ENCODE measurements at regions of chr6 and their contacts with region 1.

Region 1: GRCh38 chr6:158026054-158026900 is 44.6 kb downstream of the SYNJ2 start:
- DNase-seq: peak; percentile 89
- ATAC-seq: peak; percentile 85
- H3K4me3 Mint-ChIP-seq: peak overlapping the region; percentile 75
- H3K27ac Mint-ChIP-seq: peak overlapping the region; percentile 99
- H3K4me1 Mint-ChIP-seq: peaks cover 38% of the 10 kb centered on the region
- H3K27me3 Mint-ChIP-seq: no peaks in the 10 kb centered on the region

Region 2: DNA sequence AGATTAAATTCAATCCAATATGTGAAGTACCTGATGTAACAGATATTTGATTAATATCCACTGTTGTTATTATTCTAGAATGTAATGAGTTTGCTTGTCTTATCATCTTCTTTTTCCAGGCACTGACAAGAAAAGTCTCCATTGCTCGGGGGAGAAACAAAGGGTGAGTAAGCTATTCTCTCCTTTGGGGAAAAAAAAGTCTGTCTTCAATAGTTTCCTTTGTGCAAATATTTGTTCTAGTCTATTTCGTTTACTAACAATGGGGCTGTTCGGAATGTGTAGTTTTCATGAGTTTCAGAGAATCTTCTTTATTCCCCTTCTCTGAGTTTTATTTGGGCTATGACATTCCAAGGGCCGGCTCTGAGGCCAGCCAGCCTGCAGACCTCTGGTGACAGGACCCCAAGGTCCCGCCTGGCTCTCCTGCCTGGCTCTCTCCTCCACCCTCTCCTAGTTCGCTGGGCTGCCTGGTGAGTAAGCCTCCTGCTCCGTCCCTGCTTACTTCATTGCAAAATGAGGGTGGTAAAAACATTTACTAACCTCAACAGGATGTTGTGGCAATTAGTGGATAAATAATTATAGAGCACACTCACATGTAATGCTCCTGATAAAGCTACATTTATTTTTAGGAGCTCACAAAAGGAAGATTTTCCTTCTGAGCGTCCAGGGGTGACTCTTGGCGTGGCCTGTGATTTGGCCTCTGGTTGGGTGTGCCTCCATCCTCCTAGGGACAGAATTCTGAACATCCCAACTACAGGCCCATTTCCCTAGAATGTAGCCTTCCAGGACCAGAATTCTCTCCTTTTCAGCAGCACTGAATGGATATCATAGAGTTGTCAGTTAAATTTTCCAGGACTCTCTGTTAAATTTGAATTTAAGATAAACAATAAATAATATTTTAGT is 246.3 kb before region 1 on chr6:
- CTCF ChIA-PET with region 1: no interaction called
- POLR2A ChIA-PET with region 1: no interaction called
- intact Hi-C with region 1: no loop called
- DNase-seq: no peak
- ATAC-seq: no peak
- H3K4me3 Mint-ChIP-seq: no peak overlapping the region
- H3K27ac Mint-ChIP-seq: no peak overlapping the region
- H3K4me1 Mint-ChIP-seq: peaks cover 2% of the 10 kb centered on the region
- H3K27me3 Mint-ChIP-seq: peaks cover 3% of the 10 kb centered on the region

Region 3: GRCh38 chr6:157823001-157823527 is 203.2 kb before region 1 on chr6 and contains the start of gene SNX9:
- CTCF ChIA-PET with region 1: interaction called, 3 read pairs
- POLR2A ChIA-PET with region 1: no interaction called
- intact Hi-C with region 1: loop called in 1 of 2 experiments (anchors 1 kb)
- DNase-seq: peak; percentile 84
- ATAC-seq: peak; percentile 59
- H3K4me3 Mint-ChIP-seq: peak within 1 kb of the TSS; percentile 92
- H3K27ac Mint-ChIP-seq: peak within 1 kb of the TSS; percentile 99
- H3K4me1 Mint-ChIP-seq: peaks cover 48% of the 10 kb centered on the region
- H3K27me3 Mint-ChIP-seq: peaks cover 11% of the 10 kb centered on the region
- total RNA-seq, gene SNX9: 39.4 to 43.3 TPM

Region 4: GRCh38 chr6:157898169-157898568 is 128.1 kb before region 1 on chr6:
- CTCF ChIA-PET with region 1: no interaction called
- POLR2A ChIA-PET with region 1: no interaction called
- intact Hi-C with region 1: no loop called
- DNase-seq: peak; percentile 59
- ATAC-seq: peak; percentile 82
- H3K4me3 Mint-ChIP-seq: no peak overlapping the region
- H3K27ac Mint-ChIP-seq: no peak overlapping the region
- H3K4me1 Mint-ChIP-seq: peaks cover 14% of the 10 kb centered on the region
- H3K27me3 Mint-ChIP-seq: no peaks in the 10 kb centered on the region

Region 5: GRCh38 chr6:157946865-157947532 is 79.3 kb before region 1 on chr6:
- CTCF ChIA-PET with region 1: interaction called, 14 read pairs
- POLR2A ChIA-PET with region 1: no interaction called
- intact Hi-C with region 1: no loop called
- DNase-seq: no peak
- ATAC-seq: peak; percentile 64
- H3K4me3 Mint-ChIP-seq: no peak overlapping the region
- H3K27ac Mint-ChIP-seq: no peak overlapping the region
- H3K4me1 Mint-ChIP-seq: peaks cover 28% of the 10 kb centered on the region
- H3K27me3 Mint-ChIP-seq: peaks cover 2% of the 10 kb centered on the region

Region 6: GRCh38 chr6:158002951-158003853 is 23.1 kb before region 1 on chr6:
- CTCF ChIA-PET with region 1: interaction called, 13 read pairs
- POLR2A ChIA-PET with region 1: interaction called, 7 read pairs
- intact Hi-C with region 1: no loop called
- DNase-seq: peak; percentile 74
- ATAC-seq: peak; percentile 83
- H3K4me3 Mint-ChIP-seq: no peak overlapping the region
- H3K27ac Mint-ChIP-seq: peak overlapping the region; percentile 17
- H3K4me1 Mint-ChIP-seq: peaks cover 58% of the 10 kb centered on the region
- H3K27me3 Mint-ChIP-seq: no peaks in the 10 kb centered on the region

Region 7: DNA sequence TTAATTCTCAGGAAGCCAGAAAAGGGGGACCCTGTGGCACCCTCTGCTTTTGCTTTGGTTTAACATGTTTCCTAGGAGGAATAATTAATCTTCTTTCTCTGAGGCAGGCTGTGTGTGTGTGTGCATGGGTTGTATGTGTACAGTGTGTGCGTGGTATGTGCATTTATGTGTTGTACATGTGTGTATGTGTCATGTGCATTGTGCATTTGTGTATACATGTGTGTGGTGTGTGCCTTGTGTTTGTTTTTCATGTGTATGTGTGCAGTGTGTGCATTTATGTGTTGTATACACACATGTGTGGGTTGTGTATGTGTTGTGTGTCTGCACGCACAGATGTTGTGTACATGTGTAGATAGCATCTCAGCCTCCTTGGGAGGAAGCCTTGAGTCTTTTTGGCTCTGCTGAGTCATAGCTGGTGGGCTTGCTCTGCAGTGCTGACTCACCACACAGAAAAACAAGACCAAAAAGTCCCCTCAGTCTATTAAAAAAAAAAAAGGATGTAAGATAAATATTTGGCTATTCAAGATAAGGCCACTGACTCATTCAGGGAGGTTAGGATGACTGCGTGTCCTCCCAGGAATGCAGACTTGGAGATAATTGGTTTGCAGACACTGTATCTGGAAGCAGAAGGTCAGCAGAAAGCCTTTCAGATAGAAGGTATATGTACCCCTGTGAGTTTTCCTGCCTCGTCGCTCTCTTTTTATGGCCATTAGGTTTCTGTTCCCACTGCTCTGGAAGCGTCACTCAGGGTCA is 13.9 kb after region 1 on chr6:
- CTCF ChIA-PET with region 1: interaction called, 13 read pairs
- POLR2A ChIA-PET with region 1: interaction called, 9 read pairs
- intact Hi-C with region 1: loop called in 1 of 2 experiments (anchors 2 kb)
- DNase-seq: peak; percentile 57
- ATAC-seq: peak; percentile 73
- H3K4me3 Mint-ChIP-seq: no peak overlapping the region
- H3K27ac Mint-ChIP-seq: peak overlapping the region; percentile 73
- H3K4me1 Mint-ChIP-seq: peaks cover 32% of the 10 kb centered on the region
- H3K27me3 Mint-ChIP-seq: no peaks in the 10 kb centered on the region

Region 8: GRCh38 chr6:158057213-158057987 is 31.1 kb after region 1 on chr6:
- CTCF ChIA-PET with region 1: interaction called, 10 read pairs
- POLR2A ChIA-PET with region 1: interaction called, 20 read pairs
- intact Hi-C with region 1: loop called (anchors 1 kb)
- DNase-seq: peak; percentile 76
- ATAC-seq: peak; percentile 97
- H3K4me3 Mint-ChIP-seq: no peak overlapping the region
- H3K27ac Mint-ChIP-seq: peak overlapping the region; percentile 59
- H3K4me1 Mint-ChIP-seq: peaks cover 59% of the 10 kb centered on the region
- H3K27me3 Mint-ChIP-seq: no peaks in the 10 kb centered on the region

Region 9: GRCh38 chr6:158194487-158195280 is 168.4 kb after region 1 on chr6:
- CTCF ChIA-PET with region 1: no interaction called
- POLR2A ChIA-PET with region 1: no interaction called
- intact Hi-C with region 1: no loop called
- DNase-seq: no peak
- ATAC-seq: no peak
- H3K4me3 Mint-ChIP-seq: no peak overlapping the region
- H3K27ac Mint-ChIP-seq: no peak overlapping the region
- H3K4me1 Mint-ChIP-seq: no peaks in the 10 kb centered on the region
- H3K27me3 Mint-ChIP-seq: no peaks in the 10 kb centered on the region

Region 10: GRCh38 chr6:158207422-158207788 is 181.1 kb after region 1 on chr6:
- CTCF ChIA-PET with region 1: no interaction called
- POLR2A ChIA-PET with region 1: no interaction called
- intact Hi-C with region 1: loop called in 1 of 2 experiments (anchors 1 kb)
- DNase-seq: peak; percentile 57
- ATAC-seq: peak; percentile 95
- H3K4me3 Mint-ChIP-seq: peak overlapping the region; percentile 15
- H3K27ac Mint-ChIP-seq: peak overlapping the region; percentile 90
- H3K4me1 Mint-ChIP-seq: peaks cover 32% of the 10 kb centered on the region
- H3K27me3 Mint-ChIP-seq: peaks cover 5% of the 10 kb centered on the region

Region 11: GRCh38 chr6:158387036-158387435 is 360.8 kb after region 1 on chr6:
- CTCF ChIA-PET with region 1: no interaction called
- POLR2A ChIA-PET with region 1: no interaction called
- intact Hi-C with region 1: no loop called
- DNase-seq: no peak
- ATAC-seq: no peak
- H3K4me3 Mint-ChIP-seq: no peak overlapping the region
- H3K27ac Mint-ChIP-seq: no peak overlapping the region
- H3K4me1 Mint-ChIP-seq: peaks cover 3% of the 10 kb centered on the region
- H3K27me3 Mint-ChIP-seq: no peaks in the 10 kb centered on the region

Measured in activated CD4-positive, alpha-beta T cell treated with anti-CD3 and anti-CD28 coated beads for 36 hours (primary cell).